Activated CD4-positive, alpha-beta memory T cell treated with anti-CD3 and anti-CD28 coated beads, Interleukin-2, amount 10 ng/mL, durations not matched to agents 7 days and 5 days (primary cell): ENCODE measurements at regions of chr12 and their contacts with region 1.

Region 1: GRCh38 chr12:25052196-25052913 is 103.5 kb upstream of the BCAT1 start:
- DNase-seq: peak; percentile 55
- H3K4me3 Mint-ChIP-seq: peak overlapping the region; percentile 94
- H3K27ac Mint-ChIP-seq: peak overlapping the region; percentile 97
- H3K4me1 Mint-ChIP-seq: peaks cover 52% of the 10 kb centered on the region
- H3K27me3 Mint-ChIP-seq: peaks cover 9% of the 10 kb centered on the region

Region 2: GRCh38 chr12:25063873-25064628 is 11.7 kb after region 1 on chr12:
- CTCF ChIA-PET with region 1: interaction called, 6 read pairs
- POLR2A ChIA-PET with region 1: interaction called, 11 read pairs
- DNase-seq: no peak
- H3K4me3 Mint-ChIP-seq: no peak overlapping the region
- H3K27ac Mint-ChIP-seq: no peak overlapping the region
- H3K4me1 Mint-ChIP-seq: peaks cover 19% of the 10 kb centered on the region
- H3K27me3 Mint-ChIP-seq: no peaks in the 10 kb centered on the region

Region 3: GRCh38 chr12:25151476-25151875 is 99.1 kb after region 1 on chr12:
- CTCF ChIA-PET with region 1: interaction called, 15 read pairs
- POLR2A ChIA-PET with region 1: interaction called, 4 read pairs
- DNase-seq: no peak
- H3K4me3 Mint-ChIP-seq: no peak overlapping the region
- H3K27ac Mint-ChIP-seq: no peak overlapping the region
- H3K4me1 Mint-ChIP-seq: peaks cover 9% of the 10 kb centered on the region
- H3K27me3 Mint-ChIP-seq: peaks cover 1% of the 10 kb centered on the region